CD8-positive, alpha-beta T cell (primary cell): ENCODE measurements at regions of chr7 and their contacts with region 1.

Region 1: GRCh38 chr7:876167-876967 is at the start of gene GET4:
- DNase-seq: peak; percentile 95 to 98 (median 96)
- ATAC-seq: peak; percentile 79
- H3K4me3 ChIP-seq: peak within 1 kb of the TSS; percentile 74 to 84
- H3K4me3 Mint-ChIP-seq: peak within 1 kb of the TSS; percentile 90
- H3K27ac ChIP-seq: peak within 1 kb of the TSS; percentile 72 to 89
- H3K27ac Mint-ChIP-seq: peak within 1 kb of the TSS; percentile 89
- H3K4me1 ChIP-seq: peaks cover 25% of the 10 kb centered on the region
- H3K4me1 Mint-ChIP-seq: peaks cover 34% of the 10 kb centered on the region
- H3K27me3 ChIP-seq: no peaks in the 10 kb centered on the region
- H3K27me3 Mint-ChIP-seq: no peaks in the 10 kb centered on the region
- CTCF ChIP-seq: no peak
- total RNA-seq, gene GET4: 75.4 to 83.1 TPM

Region 2: DNA sequence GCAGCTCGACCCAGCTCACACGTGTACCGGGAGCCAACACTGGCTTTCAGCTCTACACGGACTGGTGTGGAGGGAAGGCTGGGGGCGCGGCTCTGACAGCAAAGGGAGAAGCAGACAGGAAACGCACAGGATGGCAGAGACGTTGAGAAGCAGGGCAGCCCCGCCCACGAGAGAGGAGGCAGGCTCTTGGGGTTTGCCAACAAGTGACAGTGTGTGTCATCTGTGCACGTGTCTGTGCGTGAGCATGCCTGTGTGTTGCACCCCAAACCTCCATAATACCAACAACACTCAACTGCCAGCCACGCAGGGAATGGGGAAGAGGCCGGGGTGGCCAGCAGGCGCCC is 292.3 kb before region 1 on chr7:
- CTCF ChIA-PET with region 1: no interaction called
- POLR2A ChIA-PET with region 1: no interaction called
- intact Hi-C with region 1: loop called in 1 of 2 experiments (anchors 10 kb)
- DNase-seq: peak; percentile 79 to 97 (median 91)
- ATAC-seq: peak; percentile 97
- H3K4me3 ChIP-seq: peak overlapping the region; percentile 59 to 66
- H3K4me3 Mint-ChIP-seq: peak overlapping the region; percentile 90
- H3K27ac ChIP-seq: peak overlapping the region; percentile 74 to 75
- H3K27ac Mint-ChIP-seq: peak overlapping the region; percentile 99
- H3K4me1 ChIP-seq: peaks cover 21% of the 10 kb centered on the region
- H3K4me1 Mint-ChIP-seq: peaks cover 39% of the 10 kb centered on the region
- H3K27me3 ChIP-seq: no peaks in the 10 kb centered on the region
- H3K27me3 Mint-ChIP-seq: no peaks in the 10 kb centered on the region
- CTCF ChIP-seq: no peak

Region 3: DNA sequence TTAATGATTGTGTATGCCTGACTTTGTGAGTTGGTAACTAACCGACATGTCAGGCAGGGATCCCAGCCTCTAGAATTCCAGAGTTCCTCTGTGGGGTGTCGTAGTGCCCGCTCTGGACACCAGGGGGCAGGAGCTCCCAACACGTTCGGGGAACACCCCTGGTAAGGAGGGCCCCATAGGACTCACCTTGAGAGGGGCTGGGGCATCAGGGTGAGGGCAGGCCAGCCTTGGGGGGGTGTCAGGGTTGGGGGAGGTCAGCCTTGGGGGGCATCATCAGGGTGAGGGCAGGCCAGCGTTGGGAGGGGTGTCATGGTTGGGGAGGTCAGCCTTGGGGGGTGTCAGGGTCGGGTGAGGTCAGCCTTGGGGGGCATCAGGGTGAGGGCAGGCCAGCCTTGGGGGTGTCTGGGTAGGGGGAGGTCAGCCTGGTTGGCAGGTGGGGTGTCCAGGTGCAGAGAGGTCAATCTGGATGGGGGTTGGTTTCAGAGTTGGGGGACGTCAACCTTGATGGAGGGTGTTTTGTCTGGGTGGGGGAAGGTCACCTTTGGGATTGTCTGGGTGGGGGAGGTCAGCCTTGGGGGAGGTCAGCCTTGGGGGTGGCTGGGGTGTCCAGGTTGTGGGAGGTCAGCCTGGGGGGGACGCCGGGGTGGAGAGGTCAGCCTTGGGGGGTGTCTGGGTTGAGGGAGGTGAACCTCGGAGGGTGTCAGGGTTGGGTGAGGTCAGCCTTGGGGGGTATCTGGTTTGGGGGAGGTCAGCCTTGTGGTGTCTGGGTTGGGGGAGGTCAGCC is 89.7 kb before region 1 on chr7:
- CTCF ChIA-PET with region 1: interaction called, 139 read pairs
- POLR2A ChIA-PET with region 1: interaction called, 3 read pairs
- intact Hi-C with region 1: loop called in 1 of 2 experiments (anchors 1 kb)
- DNase-seq: peak; percentile 57 to 83 (median 70)
- ATAC-seq: peak; percentile 100
- H3K4me3 ChIP-seq: no peak overlapping the region
- H3K4me3 Mint-ChIP-seq: no peak overlapping the region
- H3K27ac ChIP-seq: no peak overlapping the region
- H3K27ac Mint-ChIP-seq: no peak overlapping the region
- H3K4me1 ChIP-seq: peaks cover 4% of the 10 kb centered on the region
- H3K4me1 Mint-ChIP-seq: no peaks in the 10 kb centered on the region
- H3K27me3 ChIP-seq: no peaks in the 10 kb centered on the region
- H3K27me3 Mint-ChIP-seq: no peaks in the 10 kb centered on the region
- CTCF ChIP-seq: peak; percentile 73

Region 4: DNA sequence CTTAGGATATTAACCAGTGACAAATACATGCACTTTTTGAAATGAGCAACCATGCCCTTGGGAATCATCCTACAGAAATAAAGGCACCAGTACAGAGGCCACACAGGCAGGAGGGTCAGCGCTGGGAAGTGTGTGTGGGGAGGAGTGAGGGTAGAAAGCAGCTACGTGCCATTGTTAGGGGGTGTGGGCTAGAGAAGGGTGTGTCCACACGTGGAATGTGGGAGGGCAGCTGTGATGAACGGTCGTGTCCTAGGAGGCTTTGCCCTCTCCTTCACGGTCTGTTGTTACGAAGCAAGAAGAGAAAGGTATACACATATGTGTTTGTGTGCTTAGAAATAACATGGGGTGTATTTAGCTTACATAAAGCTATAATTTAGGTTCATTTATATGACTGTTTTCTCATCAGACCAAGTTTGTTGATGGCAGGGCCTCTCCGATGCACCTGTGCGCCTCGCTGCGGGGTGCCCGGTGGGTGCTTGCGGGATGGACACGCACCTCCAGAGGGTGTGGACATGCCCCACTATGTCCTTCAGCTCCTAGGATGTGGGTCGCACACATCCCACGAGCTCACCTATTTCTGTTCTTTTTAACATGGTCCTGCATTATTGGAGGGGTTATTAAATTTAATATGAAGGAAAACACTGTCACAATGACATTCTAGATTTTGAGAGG is 16.9 kb before region 1 on chr7:
- CTCF ChIA-PET with region 1: interaction called, 16 read pairs
- POLR2A ChIA-PET with region 1: no interaction called
- intact Hi-C with region 1: no loop called
- DNase-seq: no peak
- ATAC-seq: no peak
- H3K4me3 ChIP-seq: no peak overlapping the region
- H3K4me3 Mint-ChIP-seq: no peak overlapping the region
- H3K27ac ChIP-seq: no peak overlapping the region
- H3K27ac Mint-ChIP-seq: no peak overlapping the region
- H3K4me1 ChIP-seq: no peaks in the 10 kb centered on the region
- H3K4me1 Mint-ChIP-seq: no peaks in the 10 kb centered on the region
- H3K27me3 ChIP-seq: no peaks in the 10 kb centered on the region
- H3K27me3 Mint-ChIP-seq: no peaks in the 10 kb centered on the region
- CTCF ChIP-seq: no peak

Region 5: DNA sequence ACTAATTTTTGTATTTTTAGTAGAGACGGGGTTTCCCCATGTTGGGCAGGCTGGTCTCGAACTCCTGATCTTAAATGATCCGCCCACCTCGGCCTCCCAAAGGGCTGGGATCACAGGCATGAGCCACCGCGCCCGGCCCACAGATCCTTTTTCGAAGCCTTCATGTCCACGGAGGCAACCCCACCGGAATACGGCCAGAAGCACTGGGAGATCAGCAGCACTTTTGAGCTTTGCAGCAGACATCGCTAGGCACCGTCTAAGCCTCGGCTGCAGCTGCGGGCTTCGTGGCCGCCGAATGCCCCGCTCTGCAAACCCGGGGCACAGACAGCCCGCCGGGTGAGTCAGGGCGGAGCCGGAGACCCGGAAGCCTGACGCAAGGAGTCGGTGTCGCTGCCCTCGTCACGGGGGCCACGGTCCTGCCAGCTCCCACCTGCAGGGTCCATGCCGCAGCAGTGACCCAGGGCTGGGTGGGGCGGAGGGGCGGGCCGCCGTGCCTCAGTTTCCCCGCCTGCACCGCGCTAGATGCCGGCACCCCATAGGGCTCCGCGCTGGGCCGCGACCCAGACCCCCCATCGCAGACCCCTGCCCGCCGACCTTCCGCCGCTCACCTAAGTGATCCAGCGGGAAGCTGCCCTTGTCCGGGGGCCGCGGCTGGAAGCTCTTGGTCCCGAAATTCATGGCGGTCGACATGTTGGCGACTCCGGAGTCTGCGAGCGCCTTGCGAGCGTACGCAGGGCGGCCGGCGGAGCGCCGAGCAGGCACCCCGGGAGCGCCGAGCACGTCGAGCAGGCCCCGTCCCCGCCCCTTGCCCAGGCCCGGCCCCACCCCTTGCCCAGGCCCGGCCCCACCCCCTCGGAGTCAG is 98.7 kb after region 1 on chr7 and contains the start of gene COX19:
- CTCF ChIA-PET with region 1: interaction called, 3 read pairs
- POLR2A ChIA-PET with region 1: interaction called, 5 read pairs
- intact Hi-C with region 1: loop called (anchors 1 kb)
- DNase-seq: peak; percentile 83 to 95 (median 90)
- ATAC-seq: peak; percentile 87
- H3K4me3 ChIP-seq: peak within 1 kb of the TSS; percentile 95 to 100
- H3K4me3 Mint-ChIP-seq: peak within 1 kb of the TSS; percentile 89
- H3K27ac ChIP-seq: peak within 1 kb of the TSS; percentile 98 to 99
- H3K27ac Mint-ChIP-seq: peak within 1 kb of the TSS; percentile 95
- H3K4me1 ChIP-seq: peaks cover 28% of the 10 kb centered on the region
- H3K4me1 Mint-ChIP-seq: peaks cover 31% of the 10 kb centered on the region
- H3K27me3 ChIP-seq: no peaks in the 10 kb centered on the region
- H3K27me3 Mint-ChIP-seq: no peaks in the 10 kb centered on the region
- CTCF ChIP-seq: no peak
- total RNA-seq, gene COX19: 40.3 to 42.4 TPM

Region 6: GRCh38 chr7:1159891-1160668 is 283.7 kb after region 1 on chr7 and contains the start of gene ZFAND2A:
- CTCF ChIA-PET with region 1: no interaction called
- POLR2A ChIA-PET with region 1: no interaction called
- intact Hi-C with region 1: loop called in 1 of 2 experiments (anchors 5 kb)
- DNase-seq: peak; percentile 97 to 99 (median 99)
- ATAC-seq: peak; percentile 98
- H3K4me3 ChIP-seq: peak within 1 kb of the TSS; percentile 98
- H3K4me3 Mint-ChIP-seq: peak within 1 kb of the TSS; percentile 90
- H3K27ac ChIP-seq: peak within 1 kb of the TSS; percentile 96 to 99
- H3K27ac Mint-ChIP-seq: peak within 1 kb of the TSS; percentile 95
- H3K4me1 ChIP-seq: peaks cover 22% of the 10 kb centered on the region
- H3K4me1 Mint-ChIP-seq: peaks cover 27% of the 10 kb centered on the region
- H3K27me3 ChIP-seq: no peaks in the 10 kb centered on the region
- H3K27me3 Mint-ChIP-seq: no peaks in the 10 kb centered on the region
- CTCF ChIP-seq: no peak
- total RNA-seq, gene ZFAND2A: 100 to 105 TPM